ENCODE measurements at regions of chr12 and their contacts with region 1.

Region 1: DNA sequence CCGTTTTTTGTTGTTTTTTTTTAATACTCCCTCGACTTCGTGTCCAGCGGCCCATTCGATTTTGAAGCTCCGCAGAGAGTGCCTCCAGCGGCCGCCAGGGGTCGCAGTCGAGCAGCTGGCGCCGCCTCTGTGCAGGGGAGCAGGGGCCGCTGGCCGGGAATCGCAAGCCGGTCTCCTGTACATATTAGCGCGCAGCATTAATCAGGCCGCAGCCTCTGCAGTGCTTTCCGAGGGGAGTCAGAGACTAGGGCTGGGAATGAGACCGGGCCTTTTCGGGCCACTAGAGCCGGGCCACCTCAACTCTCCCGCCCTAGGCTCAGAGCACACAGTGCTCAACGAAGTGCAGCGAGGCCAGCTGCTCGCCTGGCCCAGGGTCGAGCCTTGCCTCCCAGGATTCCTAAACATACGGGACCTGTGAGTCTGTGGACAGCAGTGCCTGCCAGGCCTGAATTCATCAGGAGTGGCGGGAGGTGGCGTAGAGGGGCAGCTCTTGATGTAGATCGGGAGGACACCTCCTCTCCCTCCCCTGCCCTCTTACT is 81.8 kb downstream of the EMP1 start:
- DNase-seq: peak; percentile 68 to 75
- H3K4me3 ChIP-seq: no peak overlapping the region
- H3K27ac ChIP-seq: no peak overlapping the region
- H3K4me1 ChIP-seq: peaks cover 7 to 14% of the 10 kb centered on the region in 2 donors
- H3K27me3 ChIP-seq: no peaks in the 10 kb centered on the region
- CTCF ChIP-seq: peak; percentile 86 to 100 (median 94)
- POLR2A ChIP-seq: no peak

Region 2: GRCh38 chr12:13023811-13024530 is 254.3 kb before region 1 on chr12:
- intact Hi-C with region 1: no loop called
- DNase-seq: peak; percentile 34 to 60
- H3K4me3 ChIP-seq: no peak overlapping the region
- H3K27ac ChIP-seq: no peak overlapping the region
- H3K4me1 ChIP-seq: peaks cover 0 to 3% of the 10 kb centered on the region in 2 donors
- H3K27me3 ChIP-seq: no peaks in the 10 kb centered on the region
- CTCF ChIP-seq: peak; percentile 10 to 62 (median 46)
- POLR2A ChIP-seq: no peak

Region 3: GRCh38 chr12:13161172-13161571 is 117.1 kb before region 1 on chr12:
- intact Hi-C with region 1: no loop called
- DNase-seq: no peak
- H3K4me3 ChIP-seq: no peak overlapping the region
- H3K27ac ChIP-seq: no peak overlapping the region
- H3K4me1 ChIP-seq: peaks cover 9 to 16% of the 10 kb centered on the region in 2 donors
- H3K27me3 ChIP-seq: no peaks in the 10 kb centered on the region
- CTCF ChIP-seq: peak in 1 of 6 experiments; percentile 14
- POLR2A ChIP-seq: no peak

Region 4: DNA sequence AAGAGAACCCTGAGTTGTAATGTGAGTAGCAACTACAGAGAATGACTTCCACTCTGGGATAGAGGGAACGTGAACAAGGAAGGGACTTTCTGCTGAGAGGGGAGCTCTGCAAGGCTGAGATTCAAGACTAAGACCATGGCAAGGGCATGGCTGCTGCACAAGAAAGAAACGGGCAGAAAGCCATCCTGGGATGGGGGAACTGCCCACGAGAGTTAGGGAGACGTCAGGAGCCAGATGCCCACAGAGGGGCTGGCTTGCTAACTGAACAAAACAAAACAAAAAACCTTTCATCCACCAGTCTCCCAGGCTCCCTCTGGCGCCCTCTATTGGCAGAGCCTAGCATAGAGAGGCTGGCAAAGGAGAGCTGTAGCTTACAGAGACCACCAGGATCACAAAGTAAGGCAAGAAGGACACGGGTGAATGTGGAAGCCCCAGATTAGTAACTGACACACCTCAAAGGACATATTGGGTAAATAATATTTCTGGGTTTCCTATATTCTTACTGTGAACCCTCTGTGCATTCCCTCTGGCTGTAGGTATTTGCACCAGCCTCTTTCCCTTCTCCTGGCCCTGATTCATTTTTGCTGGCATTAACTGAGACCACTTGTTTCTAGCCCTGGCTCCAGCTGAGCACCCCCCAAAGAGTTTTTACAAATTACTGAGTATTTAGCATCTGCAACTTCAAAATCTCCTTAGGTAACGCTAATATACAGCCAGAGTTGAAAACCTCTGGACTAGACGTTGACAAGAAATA is 256.5 kb after region 1 on chr12:
- intact Hi-C with region 1: loop called (anchors 5 kb)
- DNase-seq: peak; percentile 71 to 81
- H3K4me3 ChIP-seq: no peak overlapping the region
- H3K27ac ChIP-seq: no peak overlapping the region
- H3K4me1 ChIP-seq: peaks cover 5 to 6% of the 10 kb centered on the region in 2 donors
- H3K27me3 ChIP-seq: no peaks in the 10 kb centered on the region
- CTCF ChIP-seq: peak; percentile 62 to 94 (median 83)
- POLR2A ChIP-seq: no peak

Region 5: GRCh38 chr12:13661005-13661887 is 382.9 kb after region 1 on chr12:
- intact Hi-C with region 1: loop called (anchors 5 kb)
- DNase-seq: peak; percentile 44 to 56
- H3K4me3 ChIP-seq: no peak overlapping the region
- H3K27ac ChIP-seq: no peak overlapping the region
- H3K4me1 ChIP-seq: no peaks in the 10 kb centered on the region
- H3K27me3 ChIP-seq: no peaks in the 10 kb centered on the region
- CTCF ChIP-seq: peak; percentile 45 to 90 (median 72)
- POLR2A ChIP-seq: no peak

Measured in thyroid gland (tissue), 4 donors.